ENCODE measurements at regions of chr7 and their contacts with region 1.

Region 1: GRCh38 chr7:115851291-115851690 is 179.3 kb downstream of the TFEC start:
- DNase-seq: peak; percentile 30
- H3K4me3 ChIP-seq: no peak overlapping the region
- H3K27ac ChIP-seq: no peak overlapping the region
- H3K27me3 ChIP-seq: no peaks in the 10 kb centered on the region
- CTCF ChIP-seq: peak; percentile 53

Region 2: GRCh38 chr7:114081606-114082425 is 1769.5 kb before region 1 on chr7:
- CTCF ChIA-PET with region 1: interaction called, 25 read pairs
- POLR2A ChIA-PET with region 1: no interaction called
- DNase-seq: peak; percentile 34
- H3K4me3 ChIP-seq: no peak overlapping the region
- H3K27ac ChIP-seq: no peak overlapping the region
- H3K27me3 ChIP-seq: peaks cover 29% of the 10 kb centered on the region
- CTCF ChIP-seq: peak; percentile 61

Region 3: GRCh38 chr7:114865564-114865963 is 985.7 kb before region 1 on chr7:
- CTCF ChIA-PET with region 1: interaction called, 46 read pairs
- POLR2A ChIA-PET with region 1: no interaction called
- DNase-seq: peak; percentile 42
- H3K4me3 ChIP-seq: no peak overlapping the region
- H3K27ac ChIP-seq: no peak overlapping the region
- H3K27me3 ChIP-seq: no peaks in the 10 kb centered on the region
- CTCF ChIP-seq: peak; percentile 86

Region 4: GRCh38 chr7:115838829-115839228 is 12.5 kb before region 1 on chr7:
- CTCF ChIA-PET with region 1: interaction called, 28 read pairs
- POLR2A ChIA-PET with region 1: no interaction called
- DNase-seq: no peak
- H3K4me3 ChIP-seq: no peak overlapping the region
- H3K27ac ChIP-seq: no peak overlapping the region
- H3K27me3 ChIP-seq: no peaks in the 10 kb centered on the region
- CTCF ChIP-seq: no peak

Region 5: GRCh38 chr7:116122972-116123595 is 271.8 kb after region 1 on chr7:
- CTCF ChIA-PET with region 1: interaction called, 17 read pairs
- POLR2A ChIA-PET with region 1: no interaction called
- DNase-seq: peak; percentile 38
- H3K4me3 ChIP-seq: no peak overlapping the region
- H3K27ac ChIP-seq: no peak overlapping the region
- H3K27me3 ChIP-seq: no peaks in the 10 kb centered on the region
- CTCF ChIP-seq: peak; percentile 83